Esophagus muscularis mucosa (tissue), 4 donors: ENCODE measurements at regions of chr7 and their contacts with region 1.

Region 1: GRCh38 chr7:12524794-12525386 is 45.6 kb upstream of the SCIN start:
- DNase-seq: no peak
- H3K4me3 ChIP-seq: no peak overlapping the region
- H3K27ac ChIP-seq: no peak overlapping the region
- H3K4me1 ChIP-seq: no peaks in the 10 kb centered on the region
- H3K27me3 ChIP-seq: no peaks in the 10 kb centered on the region
- CTCF ChIP-seq: peak; percentile 62 to 73 (median 62)
- EP300 ChIP-seq: no peak
- POLR2A ChIP-seq: no peak

Region 2: DNA sequence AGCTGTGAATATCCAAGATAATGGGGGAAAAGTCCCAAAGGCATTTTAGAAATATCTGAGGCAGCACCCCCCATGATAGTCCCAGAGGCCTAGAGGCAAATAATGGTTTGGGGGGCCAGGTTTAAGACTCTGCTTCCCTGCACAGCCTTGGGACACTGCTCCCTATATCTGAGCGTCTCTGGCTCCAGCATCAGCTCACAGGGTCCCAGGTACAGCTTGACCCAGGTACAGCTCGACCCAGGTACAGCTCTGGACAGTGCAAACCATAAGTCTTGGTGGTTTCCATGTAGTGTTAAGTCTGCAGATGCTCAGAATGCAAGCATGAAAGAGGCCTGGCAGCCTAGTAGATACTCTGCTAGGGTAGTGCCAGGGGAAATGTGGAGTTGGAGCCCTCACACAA is 74.3 kb before region 1 on chr7:
- intact Hi-C with region 1: no loop called
- DNase-seq: no peak
- H3K4me3 ChIP-seq: no peak overlapping the region
- H3K27ac ChIP-seq: no peak overlapping the region
- H3K4me1 ChIP-seq: no peaks in the 10 kb centered on the region
- H3K27me3 ChIP-seq: no peaks in the 10 kb centered on the region
- CTCF ChIP-seq: no peak
- EP300 ChIP-seq: no peak
- POLR2A ChIP-seq: no peak

Region 3: DNA sequence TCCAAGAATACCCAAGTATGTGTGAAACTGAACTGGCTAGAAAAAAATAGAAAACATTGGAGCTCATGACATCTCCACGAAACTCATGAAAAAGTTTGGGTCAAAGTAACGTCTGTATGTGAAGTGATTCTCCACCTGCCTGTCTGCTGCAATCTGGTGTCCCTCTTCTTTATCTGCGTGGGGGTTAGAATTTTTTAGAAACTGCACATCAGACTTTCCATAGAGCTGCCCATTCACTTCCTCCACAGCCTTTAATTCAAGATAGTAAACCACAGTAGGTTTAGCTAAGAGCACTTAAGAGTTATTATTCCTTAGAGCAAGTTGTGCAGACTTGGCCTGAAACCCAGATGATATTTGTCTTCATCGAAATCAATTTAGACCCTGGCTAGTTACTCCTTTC is 100.9 kb after region 1 on chr7:
- intact Hi-C with region 1: loop called (anchors 5 kb)
- DNase-seq: no peak
- H3K4me3 ChIP-seq: no peak overlapping the region
- H3K27ac ChIP-seq: no peak overlapping the region
- H3K4me1 ChIP-seq: no peaks in the 10 kb centered on the region
- H3K27me3 ChIP-seq: peaks cover 0 to 3% (median 0%) of the 10 kb centered on the region in 4 donors
- CTCF ChIP-seq: no peak
- EP300 ChIP-seq: no peak
- POLR2A ChIP-seq: no peak